ENCODE measurements at regions of chr11 and their contacts with region 1.

Region 1: GRCh38 chr11:62315431-62315830 is 16.6 kb upstream of the SCGB1D4 start:
- DNase-seq: no peak
- ATAC-seq: no peak
- H3K4me3 ChIP-seq: no peak overlapping the region
- H3K27ac ChIP-seq: no peak overlapping the region
- H3K4me1 ChIP-seq: no peaks in the 10 kb centered on the region
- H3K27me3 ChIP-seq: peaks cover 24% of the 10 kb centered on the region
- CTCF ChIP-seq: no peak
- POLR2A ChIP-seq: no peak
- RAD21 ChIP-seq: no peak

Region 2: GRCh38 chr11:62122076-62122475 is 193.4 kb before region 1 on chr11:
- CTCF ChIA-PET with region 1: no interaction called
- POLR2A ChIA-PET with region 1: no interaction called
- dilution Hi-C with region 1: no loop called
- in situ Hi-C with region 1: no loop called
- intact Hi-C with region 1: loop called (anchors 1 kb)
- DNase-seq: no peak
- ATAC-seq: no peak
- H3K4me3 ChIP-seq: no peak overlapping the region
- H3K27ac ChIP-seq: no peak overlapping the region
- H3K4me1 ChIP-seq: peaks cover 3% of the 10 kb centered on the region; the same call in 1 of the 2 replicates
- H3K27me3 ChIP-seq: no peaks in the 10 kb centered on the region
- CTCF ChIP-seq: 0 out of 2 replicates have a peak, but pooled peaks have one; percentile 22
- POLR2A ChIP-seq: no peak
- RAD21 ChIP-seq: no peak

Region 3: DNA sequence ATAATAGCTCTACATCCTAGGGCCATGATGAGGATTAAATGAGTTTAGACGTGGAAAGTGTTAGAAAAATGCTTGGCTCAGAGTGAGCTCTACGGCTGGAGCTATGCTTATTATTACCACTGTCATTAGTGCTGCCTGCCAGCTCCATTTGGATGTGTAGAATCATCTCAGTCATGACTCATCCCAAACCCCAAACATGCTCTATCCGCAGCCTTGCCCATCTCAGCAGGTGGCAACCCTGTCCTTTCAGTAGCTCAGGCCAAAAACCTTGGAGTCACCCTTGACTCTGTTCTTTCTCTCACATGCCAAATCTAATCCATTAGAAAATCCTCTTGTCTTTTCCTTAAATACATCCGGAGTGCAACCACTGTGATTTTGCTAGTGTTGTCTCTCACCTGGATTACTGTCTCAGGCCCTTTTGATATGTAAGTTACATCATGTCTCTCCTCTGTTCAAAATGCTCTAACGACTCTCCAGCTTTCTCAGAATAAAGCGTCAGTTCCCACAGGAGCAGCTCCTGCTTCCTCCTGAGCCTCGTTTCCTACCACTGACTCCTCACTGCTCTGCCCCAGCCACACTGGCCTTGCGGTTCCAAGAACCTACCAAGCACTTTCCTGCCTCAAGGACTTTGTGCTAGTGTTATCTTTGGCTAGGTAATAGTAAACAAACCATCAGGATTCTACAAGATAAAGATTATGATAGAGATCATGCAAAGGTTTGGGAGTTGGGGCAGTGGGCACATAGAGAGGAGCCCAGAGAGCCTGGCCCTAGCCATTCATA is 616.3 kb after region 1 on chr11:
- CTCF ChIA-PET with region 1: no interaction called
- POLR2A ChIA-PET with region 1: no interaction called
- dilution Hi-C with region 1: no loop called
- in situ Hi-C with region 1: no loop called
- intact Hi-C with region 1: no loop called
- DNase-seq: no peak
- ATAC-seq: no peak
- H3K4me3 ChIP-seq: no peak overlapping the region
- H3K27ac ChIP-seq: no peak overlapping the region
- H3K4me1 ChIP-seq: no peaks in the 10 kb centered on the region
- H3K27me3 ChIP-seq: peaks cover 41% of the 10 kb centered on the region
- CTCF ChIP-seq: no peak
- POLR2A ChIP-seq: no peak
- RAD21 ChIP-seq: no peak